ENCODE measurements at regions of chr17 and their contacts with region 1.

Region 1: DNA sequence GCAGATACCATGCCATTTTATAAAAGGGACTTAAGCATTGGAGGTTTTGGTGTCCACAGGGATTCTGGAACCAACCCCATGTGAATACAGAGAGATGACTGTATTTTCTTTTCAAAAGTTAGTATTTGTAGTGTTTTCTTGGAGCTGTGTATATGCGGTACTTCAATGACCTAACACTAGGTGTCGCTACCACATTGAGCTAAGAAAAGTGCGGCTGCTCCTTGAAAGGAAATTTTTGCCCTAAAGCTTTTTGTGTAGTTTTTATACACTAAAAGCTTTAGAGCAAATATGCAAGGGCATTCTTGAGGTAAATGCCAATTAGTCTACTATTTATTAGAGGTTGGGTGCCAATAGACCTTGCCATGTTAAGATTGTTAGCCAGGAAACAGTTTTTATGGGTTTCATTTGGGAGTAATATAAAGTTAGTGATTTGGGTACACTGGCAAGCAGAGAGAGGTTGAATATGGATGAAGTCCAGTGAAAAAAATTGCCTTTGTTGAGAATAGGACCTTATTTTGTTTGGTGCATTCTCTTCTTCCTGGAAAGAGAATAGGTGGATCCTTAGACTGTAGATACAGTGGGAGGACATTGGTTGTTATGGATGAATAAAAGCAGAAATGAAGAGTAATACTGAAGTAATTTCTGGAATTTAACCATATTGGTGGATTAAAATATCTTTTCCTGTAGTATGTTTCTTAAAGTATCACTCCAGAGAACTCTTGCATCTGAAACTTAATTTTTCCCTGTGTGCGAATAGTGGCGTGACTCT is 43.3 kb downstream of the BCAS3 start:
- DNase-seq: peak; percentile 50
- H3K4me3 ChIP-seq: no peak overlapping the region
- H3K27ac ChIP-seq: no peak overlapping the region
- H3K4me1 ChIP-seq: no peaks in the 10 kb centered on the region
- H3K27me3 ChIP-seq: no peaks in the 10 kb centered on the region
- CTCF ChIP-seq: peak; percentile 82

Region 2: GRCh38 chr17:60781880-60782412 is 61.0 kb after region 1 on chr17:
- intact Hi-C with region 1: no loop called
- DNase-seq: no peak
- H3K4me3 ChIP-seq: no peak overlapping the region
- H3K27ac ChIP-seq: no peak overlapping the region
- H3K4me1 ChIP-seq: no peaks in the 10 kb centered on the region
- H3K27me3 ChIP-seq: no peaks in the 10 kb centered on the region
- CTCF ChIP-seq: no peak

Region 3: DNA sequence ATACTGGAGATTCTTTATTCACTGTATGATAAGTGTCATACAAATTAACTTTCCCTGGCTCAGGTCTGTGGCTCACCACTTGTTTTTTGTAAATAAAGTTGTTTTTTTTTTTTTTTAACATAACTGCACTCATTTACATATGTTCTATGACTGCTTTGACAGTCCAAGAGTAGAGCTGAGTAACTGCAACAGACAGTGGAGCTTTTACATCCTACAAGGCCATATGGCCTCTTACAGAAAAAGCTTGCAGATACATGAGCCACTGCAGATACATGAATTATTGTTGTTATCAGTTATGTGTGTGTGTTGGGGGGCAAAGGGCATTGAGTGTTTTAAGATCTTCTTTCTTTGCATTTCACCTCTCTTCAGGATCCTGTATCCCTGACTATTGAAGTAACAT is 268.4 kb after region 1 on chr17:
- intact Hi-C with region 1: loop called (anchors 10 kb)
- DNase-seq: no peak
- H3K4me3 ChIP-seq: no peak overlapping the region
- H3K27ac ChIP-seq: no peak overlapping the region
- H3K4me1 ChIP-seq: no peaks in the 10 kb centered on the region
- H3K27me3 ChIP-seq: no peaks in the 10 kb centered on the region
- CTCF ChIP-seq: no peak

Region 4: GRCh38 chr17:61389670-61390478 is 668.9 kb after region 1 on chr17:
- intact Hi-C with region 1: loop called (anchors 2 kb)
- DNase-seq: no peak
- H3K4me3 ChIP-seq: no peak overlapping the region
- H3K27ac ChIP-seq: no peak overlapping the region
- H3K4me1 ChIP-seq: no peaks in the 10 kb centered on the region
- H3K27me3 ChIP-seq: no peaks in the 10 kb centered on the region
- CTCF ChIP-seq: peak; percentile 83